ENCODE measurements at regions of chr3 and their contacts with region 1.

Region 1: GRCh38 chr3:126512026-126512425 is 5.5 kb downstream of the UROC1 start:
- DNase-seq: no peak
- CTCF ChIP-seq: no peak

Region 2: DNA sequence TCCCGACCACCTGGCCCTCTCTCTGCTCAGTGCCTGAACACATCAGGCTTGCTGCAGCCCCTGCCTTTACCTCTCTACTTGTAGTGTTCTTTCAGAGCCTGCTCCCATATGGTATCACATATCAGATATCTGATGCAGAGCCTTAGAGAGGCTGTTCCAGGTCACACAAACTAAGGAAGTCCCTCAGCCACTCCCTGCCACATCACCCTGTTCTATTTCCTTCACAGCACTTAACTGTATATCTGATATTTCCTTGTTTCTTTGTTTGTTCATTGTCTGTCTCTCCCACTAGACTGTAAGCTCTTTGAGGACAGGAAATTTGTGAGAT is 330.7 kb before region 1 on chr3:
- CTCF ChIA-PET with region 1: no interaction called
- POLR2A ChIA-PET with region 1: no interaction called
- DNase-seq: no peak
- CTCF ChIP-seq: no peak

Region 3: GRCh38 chr3:126522363-126522788 is 10.3 kb after region 1 on chr3:
- CTCF ChIA-PET with region 1: interaction called, 21 read pairs
- POLR2A ChIA-PET with region 1: no interaction called
- DNase-seq: peak; percentile 75
- CTCF ChIP-seq: peak; percentile 90

Region 4: GRCh38 chr3:126537730-126538281 is 25.8 kb after region 1 on chr3:
- CTCF ChIA-PET with region 1: no interaction called
- POLR2A ChIA-PET with region 1: no interaction called
- DNase-seq: no peak
- CTCF ChIP-seq: no peak

Measured in GM10248 (cell line).